Mammary epithelial cell (primary cell): ENCODE measurements at regions of chr22 and their contacts with region 1.

Region 1: GRCh38 chr22:39117585-39118191 is 20.6 kb downstream of the APOBEC3H start:
- DNase-seq: peak; percentile 42
- H3K4me3 ChIP-seq: no peak overlapping the region
- H3K27ac ChIP-seq: no peak overlapping the region
- H3K4me1 ChIP-seq: peaks cover 10% of the 10 kb centered on the region
- H3K27me3 ChIP-seq: no peaks in the 10 kb centered on the region
- CTCF ChIP-seq: peak; percentile 52 to 67

Region 2: GRCh38 chr22:39013942-39014722 is 103.6 kb before region 1 on chr22 and contains the start of gene APOBEC3C:
- CTCF ChIA-PET with region 1: no interaction called
- dilution Hi-C with region 1: no loop called
- in situ Hi-C with region 1: loop called (anchors 5 kb)
- intact Hi-C with region 1: loop called (anchors 1 kb)
- DNase-seq: peak; percentile 86
- H3K4me3 ChIP-seq: peak within 1 kb of the TSS; percentile 62 to 73 (median 62)
- H3K27ac ChIP-seq: peak within 1 kb of the TSS; percentile 38
- H3K4me1 ChIP-seq: peaks cover 17% of the 10 kb centered on the region
- H3K27me3 ChIP-seq: no peaks in the 10 kb centered on the region
- CTCF ChIP-seq: peak in 1 of 2 donors; percentile 22
- total RNA-seq, gene APOBEC3C: 30.5 to 151 TPM

Region 3: DNA sequence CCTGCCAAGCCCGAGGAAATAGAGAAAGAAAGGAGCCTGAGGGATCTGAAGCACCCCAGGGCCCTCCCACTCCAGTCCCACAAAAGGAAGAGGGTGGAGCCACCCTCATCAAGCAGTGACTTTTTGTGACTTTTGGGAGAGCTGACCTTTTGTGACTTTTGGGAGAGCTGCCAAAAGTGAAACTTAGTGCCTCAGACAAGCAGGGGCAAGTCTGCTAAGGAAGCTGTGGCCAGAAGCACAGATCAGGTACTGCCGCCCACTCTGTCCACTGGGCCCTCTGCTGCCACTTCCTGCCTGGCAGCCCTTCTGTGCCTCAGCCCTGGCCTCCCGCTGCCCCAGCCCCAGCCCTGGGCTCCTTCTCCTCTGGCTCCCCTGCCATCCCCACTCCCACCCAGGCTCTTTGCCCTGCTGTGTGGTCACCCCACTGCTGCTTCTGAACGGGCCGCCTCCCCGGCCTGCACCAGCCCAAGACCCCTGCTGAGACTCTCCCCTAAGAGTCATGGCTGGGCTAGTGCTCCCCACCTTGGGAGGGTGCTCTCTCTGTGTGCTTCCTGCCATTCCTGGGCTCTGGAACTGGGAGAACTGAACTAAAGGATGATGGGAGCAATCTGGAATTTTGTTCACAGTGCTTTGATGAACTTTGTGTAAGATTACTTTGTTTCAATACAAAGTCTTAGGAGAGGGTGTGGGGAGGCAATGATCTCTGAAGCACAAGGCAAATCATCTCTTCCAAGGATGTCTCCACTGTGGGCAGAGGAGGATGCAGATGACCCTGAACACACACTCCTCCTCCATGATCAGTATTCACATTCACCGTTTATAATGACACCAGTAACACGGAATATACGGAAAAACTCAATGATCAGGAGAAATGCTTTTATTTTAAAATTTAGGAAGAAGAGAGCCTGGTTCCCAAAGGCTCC is 20.3 kb before region 1 on chr22 and contains the start of gene APOBEC3H:
- CTCF ChIA-PET with region 1: no interaction called
- dilution Hi-C with region 1: no loop called
- in situ Hi-C with region 1: no loop called
- intact Hi-C with region 1: loop called (anchors 2 kb)
- DNase-seq: peak; percentile 91
- H3K4me3 ChIP-seq: no peak within 1 kb of the TSS
- H3K27ac ChIP-seq: peak within 1 kb of the TSS; percentile 56
- H3K4me1 ChIP-seq: peaks cover 29% of the 10 kb centered on the region
- H3K27me3 ChIP-seq: no peaks in the 10 kb centered on the region
- CTCF ChIP-seq: no peak
- total RNA-seq, gene APOBEC3H: 0.87 TPM in 1 of 2 donors, not detected in the other